ENCODE measurements at regions of chr12 and their contacts with region 1.

Region 1: DNA sequence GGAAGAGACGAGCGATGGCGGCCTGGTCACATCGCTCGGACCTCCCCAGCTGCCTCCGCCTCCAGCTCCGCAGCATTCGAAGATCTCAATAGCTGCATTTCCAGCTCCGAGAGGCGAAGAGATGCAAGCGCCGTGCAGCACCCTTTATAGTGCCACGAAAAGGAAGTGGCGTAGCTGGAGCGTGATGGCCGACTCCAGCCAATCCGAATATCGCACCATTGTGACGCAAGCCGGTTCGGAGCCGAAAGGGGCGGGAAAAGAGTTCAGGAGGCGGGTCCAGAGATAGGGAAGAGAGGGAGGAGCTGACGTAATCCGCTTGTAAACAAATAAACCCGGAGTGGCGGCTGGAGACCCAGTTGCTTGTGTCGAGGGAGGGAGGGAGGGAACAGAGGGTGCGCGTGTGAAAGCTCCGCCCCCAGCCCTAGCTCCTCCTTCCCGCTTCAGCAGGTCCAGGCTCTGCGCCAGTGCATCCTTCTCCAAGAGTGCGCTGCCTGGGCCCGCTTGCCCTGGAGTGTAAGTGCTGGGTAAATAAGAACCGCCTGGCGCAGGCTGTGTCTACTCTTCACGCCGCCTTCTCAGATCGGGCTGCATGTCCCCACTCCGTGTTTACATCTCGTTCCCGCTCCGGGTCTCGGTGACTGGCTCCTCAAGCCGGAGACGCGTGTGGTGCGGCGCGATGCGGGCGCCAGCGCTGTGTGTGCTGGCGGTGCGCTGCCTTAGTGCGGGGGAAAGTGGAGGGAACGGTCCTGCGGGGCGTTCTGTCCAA is at the start of gene BTG1:
- DNase-seq: peak; percentile 96 to 100 (median 98)
- ATAC-seq: peak; percentile 68
- H3K4me3 ChIP-seq: peak within 1 kb of the TSS; percentile 94
- H3K4me3 Mint-ChIP-seq: peak within 1 kb of the TSS; percentile 100
- H3K27ac ChIP-seq: peak within 1 kb of the TSS; percentile 88 to 98
- H3K27ac Mint-ChIP-seq: peak within 1 kb of the TSS; percentile 99
- H3K4me1 ChIP-seq: peaks cover 4% of the 10 kb centered on the region
- H3K4me1 Mint-ChIP-seq: peaks cover 39% of the 10 kb centered on the region
- H3K27me3 ChIP-seq: no peaks in the 10 kb centered on the region
- H3K27me3 Mint-ChIP-seq: peaks cover 15% of the 10 kb centered on the region
- CTCF ChIP-seq: no peak
- total RNA-seq, gene BTG1: 1,698 to 1,774 TPM

Region 2: DNA sequence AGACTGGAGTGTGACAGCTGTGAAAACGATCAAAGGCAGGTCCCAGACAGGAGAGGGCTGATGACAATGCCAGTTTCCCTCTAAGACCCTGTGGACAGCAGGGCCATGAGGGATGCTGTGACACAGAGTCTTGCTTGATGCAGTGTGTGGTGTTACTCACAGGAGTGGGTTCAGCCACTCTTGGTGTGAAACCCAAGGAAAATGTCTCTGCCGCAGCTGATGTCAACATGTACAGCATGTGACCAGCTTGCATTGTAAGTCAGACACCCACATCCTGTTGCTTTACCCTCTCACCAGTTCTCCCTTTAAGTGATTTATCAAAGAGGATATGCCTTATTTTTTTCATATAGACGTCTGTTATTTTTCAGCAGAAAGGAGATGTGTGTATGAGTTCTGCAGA is 268.9 kb before region 1 on chr12:
- CTCF ChIA-PET with region 1: interaction called, 34 read pairs
- POLR2A ChIA-PET with region 1: interaction called, 178 read pairs
- intact Hi-C with region 1: loop called (anchors 1 to 5 kb)
- DNase-seq: peak; percentile 71 to 98 (median 82)
- ATAC-seq: peak; percentile 90
- H3K4me3 ChIP-seq: peak overlapping the region; percentile 30
- H3K4me3 Mint-ChIP-seq: peak overlapping the region; percentile 73
- H3K27ac ChIP-seq: peak overlapping the region; percentile 92 to 97
- H3K27ac Mint-ChIP-seq: peak overlapping the region; percentile 98
- H3K4me1 ChIP-seq: peaks cover 44% of the 10 kb centered on the region
- H3K4me1 Mint-ChIP-seq: peaks cover 67% of the 10 kb centered on the region
- H3K27me3 ChIP-seq: no peaks in the 10 kb centered on the region
- H3K27me3 Mint-ChIP-seq: no peaks in the 10 kb centered on the region
- CTCF ChIP-seq: no peak

Region 3: DNA sequence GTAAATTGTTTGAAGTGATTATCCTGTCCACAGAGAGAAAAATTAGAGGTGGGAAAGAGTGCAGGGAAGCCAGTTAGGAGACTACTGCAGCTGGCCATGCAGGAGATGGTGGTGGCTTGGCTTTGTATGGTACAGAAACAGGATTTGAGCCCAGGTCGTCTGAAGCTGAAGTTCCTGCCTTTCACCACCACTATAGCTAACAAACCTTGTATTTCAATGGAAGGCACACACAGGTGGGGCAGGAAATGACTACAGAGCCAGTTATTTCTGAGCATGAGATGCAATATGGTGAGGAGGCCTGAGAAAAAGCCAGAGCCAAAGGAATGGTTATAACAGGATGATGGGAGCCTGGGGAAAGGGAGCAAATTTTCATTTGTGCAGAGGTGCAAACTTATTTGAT is 104.2 kb before region 1 on chr12:
- CTCF ChIA-PET with region 1: interaction called, 3 read pairs
- POLR2A ChIA-PET with region 1: interaction called, 276 read pairs
- intact Hi-C with region 1: no loop called
- DNase-seq: peak in 7 of 14 experiments; percentile 21 to 75 (median 57)
- ATAC-seq: peak; percentile 97
- H3K4me3 ChIP-seq: no peak overlapping the region
- H3K4me3 Mint-ChIP-seq: peak overlapping the region; percentile 77
- H3K27ac ChIP-seq: peak overlapping the region in 1 of 2 donors; percentile 20
- H3K27ac Mint-ChIP-seq: peak overlapping the region; percentile 85
- H3K4me1 ChIP-seq: peaks cover 47% of the 10 kb centered on the region
- H3K4me1 Mint-ChIP-seq: peaks cover 88% of the 10 kb centered on the region
- H3K27me3 ChIP-seq: no peaks in the 10 kb centered on the region
- H3K27me3 Mint-ChIP-seq: no peaks in the 10 kb centered on the region
- CTCF ChIP-seq: no peak

Region 4: DNA sequence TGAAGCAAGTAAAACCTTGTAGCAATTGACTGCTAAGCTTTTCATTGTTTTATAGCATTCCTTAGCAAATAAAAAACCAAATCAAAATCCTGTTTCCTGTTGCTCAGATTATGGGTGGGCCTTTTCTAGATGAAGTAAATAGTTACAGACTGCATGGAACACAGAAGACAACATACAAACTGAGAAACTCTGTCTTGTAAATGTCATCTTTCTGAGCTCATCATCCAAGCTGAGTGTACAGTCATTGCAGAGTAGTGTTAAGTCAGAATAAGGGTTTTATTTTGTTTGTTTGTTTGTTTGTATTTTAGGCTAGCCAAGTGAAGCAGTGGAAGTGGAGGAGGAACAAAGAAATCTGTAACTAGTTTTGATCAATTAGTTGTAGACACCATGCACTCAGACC is 24.1 kb after region 1 on chr12:
- CTCF ChIA-PET with region 1: no interaction called
- POLR2A ChIA-PET with region 1: interaction called, 92 read pairs
- intact Hi-C with region 1: no loop called
- DNase-seq: no peak
- ATAC-seq: no peak
- H3K4me3 ChIP-seq: no peak overlapping the region
- H3K4me3 Mint-ChIP-seq: no peak overlapping the region
- H3K27ac ChIP-seq: no peak overlapping the region
- H3K27ac Mint-ChIP-seq: no peak overlapping the region
- H3K4me1 ChIP-seq: peaks cover 5% of the 10 kb centered on the region
- H3K4me1 Mint-ChIP-seq: peaks cover 29% of the 10 kb centered on the region
- H3K27me3 ChIP-seq: no peaks in the 10 kb centered on the region
- H3K27me3 Mint-ChIP-seq: no peaks in the 10 kb centered on the region
- CTCF ChIP-seq: no peak

Region 5: DNA sequence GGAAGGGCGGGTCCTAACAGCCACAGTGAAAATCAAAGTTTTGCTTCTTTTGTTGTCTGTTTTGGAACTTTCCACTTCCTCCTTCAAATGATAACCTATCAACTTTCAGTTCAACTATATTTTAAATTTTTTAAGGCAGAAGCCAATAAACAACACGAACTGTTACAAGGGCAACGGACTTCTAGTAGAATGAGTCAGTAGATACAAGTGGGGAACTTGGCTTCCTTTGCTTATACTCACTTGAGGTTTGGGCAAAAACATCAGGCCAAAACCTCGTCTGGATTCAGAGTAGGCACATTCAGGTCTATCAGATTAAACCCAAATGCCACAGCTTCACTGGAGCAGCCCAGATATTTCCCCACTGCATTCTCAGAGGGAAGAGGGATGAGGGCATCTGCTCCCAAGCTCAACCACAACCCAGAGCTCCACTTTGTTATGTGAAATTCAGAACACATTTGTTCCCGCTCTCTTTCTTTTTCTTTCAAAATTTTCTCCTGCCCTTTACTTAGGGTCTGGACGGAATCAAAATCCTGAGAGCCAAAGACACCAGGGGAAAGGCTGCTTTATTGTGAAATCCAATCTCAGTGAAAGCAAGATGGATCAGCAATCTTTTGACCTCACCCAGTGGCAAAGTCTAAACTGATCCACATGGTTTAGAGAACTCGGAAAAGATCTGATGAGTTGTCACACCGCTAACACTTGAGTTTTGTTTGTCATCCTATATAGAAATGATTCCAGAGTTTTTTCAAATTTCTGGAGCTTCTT is 152.2 kb after region 1 on chr12:
- CTCF ChIA-PET with region 1: no interaction called
- POLR2A ChIA-PET with region 1: interaction called, 23 read pairs
- intact Hi-C with region 1: no loop called
- DNase-seq: peak in 6 of 14 experiments; percentile 2 to 72 (median 52)
- ATAC-seq: peak; percentile 94
- H3K4me3 ChIP-seq: no peak overlapping the region
- H3K4me3 Mint-ChIP-seq: peak overlapping the region; percentile 23
- H3K27ac ChIP-seq: peak overlapping the region; percentile 29 to 58
- H3K27ac Mint-ChIP-seq: no peak overlapping the region
- H3K4me1 ChIP-seq: peaks cover 38% of the 10 kb centered on the region
- H3K4me1 Mint-ChIP-seq: peaks cover 22% of the 10 kb centered on the region
- H3K27me3 ChIP-seq: no peaks in the 10 kb centered on the region
- H3K27me3 Mint-ChIP-seq: no peaks in the 10 kb centered on the region
- CTCF ChIP-seq: no peak

Region 6: GRCh38 chr12:92505254-92506231 is 359.6 kb after region 1 on chr12:
- CTCF ChIA-PET with region 1: no interaction called
- POLR2A ChIA-PET with region 1: interaction called, 58 read pairs
- intact Hi-C with region 1: no loop called
- DNase-seq: peak; percentile 10 to 75 (median 34)
- ATAC-seq: peak; percentile 75
- H3K4me3 ChIP-seq: peak overlapping the region; percentile 41
- H3K4me3 Mint-ChIP-seq: peak overlapping the region; percentile 84
- H3K27ac ChIP-seq: peak overlapping the region; percentile 38 to 79
- H3K27ac Mint-ChIP-seq: peak overlapping the region; percentile 90
- H3K4me1 ChIP-seq: peaks cover 32% of the 10 kb centered on the region
- H3K4me1 Mint-ChIP-seq: peaks cover 29% of the 10 kb centered on the region
- H3K27me3 ChIP-seq: no peaks in the 10 kb centered on the region
- H3K27me3 Mint-ChIP-seq: no peaks in the 10 kb centered on the region
- CTCF ChIP-seq: no peak